GM12878 (cell line): ENCODE measurements at regions of chr9 and their contacts with region 1.

Region 1: DNA sequence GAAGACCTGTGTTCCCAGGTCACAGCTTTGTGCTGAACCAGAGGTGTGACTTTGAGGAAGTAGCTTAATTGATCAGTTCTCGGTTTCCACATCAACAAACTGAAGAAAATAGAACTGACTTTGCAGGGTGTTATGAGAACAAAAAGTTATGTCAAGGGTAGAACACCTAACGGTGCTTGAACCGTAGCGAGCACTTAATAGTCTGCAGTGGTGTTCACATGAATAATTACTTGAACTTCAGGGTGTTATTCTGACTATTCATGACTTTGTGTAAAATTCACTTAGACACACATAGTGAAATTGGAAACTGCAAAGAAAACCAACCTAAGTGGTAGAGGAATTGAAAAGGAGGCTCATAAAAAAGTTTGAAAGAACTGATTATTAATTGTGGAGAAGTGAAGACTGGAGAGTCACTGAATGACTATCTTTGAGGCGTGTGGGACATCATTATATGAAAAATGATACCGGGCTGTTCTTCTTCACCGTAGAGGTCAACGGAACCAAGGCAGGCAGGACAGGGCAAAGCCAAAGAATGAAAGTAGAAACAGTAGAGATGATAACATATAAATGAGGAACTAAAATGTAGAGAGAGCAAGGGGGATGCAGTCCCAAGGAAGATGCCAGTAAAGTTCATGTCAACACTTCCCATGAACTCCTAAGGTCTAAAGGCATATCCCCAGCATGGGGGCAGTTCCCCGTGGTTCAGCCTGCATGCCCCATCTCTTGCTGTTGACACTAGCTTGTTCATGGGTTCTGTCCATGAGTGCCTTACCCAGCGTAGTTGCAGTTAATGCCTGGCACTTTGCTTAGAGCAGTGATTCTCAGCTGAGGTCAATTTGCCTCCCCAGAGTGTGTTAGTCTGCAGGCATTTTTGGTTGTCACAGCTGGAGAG is 118.7 kb downstream of the ZNF462 start:
- DNase-seq: peak; percentile 83
- ATAC-seq: peak; percentile 85
- H3K4me3 ChIP-seq: no peak overlapping the region
- H3K27ac ChIP-seq: peak overlapping the region; percentile 28; the same call in 1 of the 2 replicates
- H3K4me1 ChIP-seq: peaks cover 21% of the 10 kb centered on the region
- H3K27me3 ChIP-seq: no peaks in the 10 kb centered on the region; a peak in 1 of 4 replicates
- CTCF ChIP-seq: no peak
- EP300 ChIP-seq: peak; percentile 53 to 80; a peak in 3 of 4 replicates
- POLR2A ChIP-seq: no peak
- RAD21 ChIP-seq: no peak

Region 2: GRCh38 chr9:106816524-106816923 is 165.1 kb before region 1 on chr9:
- CTCF ChIA-PET with region 1: no interaction called
- POLR2A ChIA-PET with region 1: no interaction called
- RAD21 ChIA-PET with region 1: no interaction called
- SMC1A ChIA-PET with region 1: no interaction called
- in situ Hi-C with region 1: no loop called
- intact Hi-C with region 1: no loop called
- DNase-seq: peak; percentile 16
- ATAC-seq: peak; percentile 85
- H3K4me3 ChIP-seq: no peak overlapping the region
- H3K27ac ChIP-seq: no peak overlapping the region
- H3K4me1 ChIP-seq: no peaks in the 10 kb centered on the region
- H3K27me3 ChIP-seq: no peaks in the 10 kb centered on the region
- CTCF ChIP-seq: no peak
- EP300 ChIP-seq: peak in 1 of 2 experiments; percentile 75; a peak in 1 of 4 replicates
- POLR2A ChIP-seq: no peak
- RAD21 ChIP-seq: no peak

Region 3: DNA sequence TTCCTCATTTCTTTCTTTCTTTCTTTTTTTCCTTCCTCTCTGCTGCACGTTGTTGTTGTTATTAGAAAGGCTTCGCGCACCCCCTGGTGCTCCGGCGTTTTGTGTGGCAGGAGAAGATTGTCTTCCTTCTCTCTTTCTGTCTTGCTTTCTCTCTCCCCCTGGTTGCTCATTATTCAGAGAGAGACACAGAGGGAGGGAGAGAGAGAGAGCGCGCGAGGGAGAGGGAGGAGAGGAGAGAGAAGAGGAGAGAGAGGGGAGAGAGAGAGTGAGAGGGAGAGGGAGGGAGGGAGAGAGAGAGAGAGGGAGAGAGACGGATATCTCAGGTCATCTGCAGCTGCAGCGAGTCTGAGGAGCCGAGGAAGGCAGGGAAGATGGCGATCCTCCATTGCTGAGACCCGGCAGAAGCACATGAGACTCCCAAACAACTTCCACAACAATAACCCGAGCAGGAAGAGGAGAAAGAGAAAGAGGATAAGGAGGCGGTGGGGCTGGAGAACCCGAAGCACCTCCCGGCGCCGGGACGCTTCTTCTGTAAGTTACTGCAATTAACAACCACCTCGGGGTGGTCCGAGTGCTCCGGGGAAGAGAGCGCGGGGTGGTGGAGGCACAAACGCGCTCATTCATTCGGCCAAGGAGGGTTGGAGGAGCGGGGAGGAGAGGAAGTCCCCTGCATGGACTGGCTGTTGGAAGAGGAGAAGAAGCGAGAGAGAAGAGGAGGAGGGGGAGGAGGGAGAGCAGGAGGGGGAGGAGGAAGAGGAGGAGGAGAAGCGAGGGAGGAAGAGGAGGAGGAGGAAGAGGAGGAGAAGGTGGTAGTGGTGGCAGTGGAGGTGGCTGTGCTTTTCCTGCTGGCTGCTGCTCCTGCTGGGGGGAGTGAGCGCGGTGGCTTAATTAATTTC is 118.6 kb before region 1 on chr9 and contains the start of gene ZNF462:
- CTCF ChIA-PET with region 1: interaction called, 26 read pairs
- POLR2A ChIA-PET with region 1: interaction called, 8 read pairs
- RAD21 ChIA-PET with region 1: interaction called, 80 read pairs
- SMC1A ChIA-PET with region 1: interaction called, 65 read pairs
- in situ Hi-C with region 1: no loop called
- intact Hi-C with region 1: loop called (anchors 1 kb)
- DNase-seq: no peak
- ATAC-seq: peak; percentile 42
- H3K4me3 ChIP-seq: no peak within 1 kb of the TSS
- H3K27ac ChIP-seq: no peak within 1 kb of the TSS
- H3K4me1 ChIP-seq: no peaks in the 10 kb centered on the region
- H3K27me3 ChIP-seq: peaks cover 6 to 19% of the 10 kb centered on the region in 2 experiments; a peak in 3 of 4 replicates
- CTCF ChIP-seq: peak in 1 of 3 experiments; percentile 44; a peak in 2 of 6 replicates
- EP300 ChIP-seq: no peak
- POLR2A ChIP-seq: no peak
- RAD21 ChIP-seq: peak; percentile 29; the same call in 1 of the 2 replicates
- polyA plus RNA-seq, gene ZNF462: 0.27 to 0.42 TPM

Region 4: GRCh38 chr9:106921341-106921899 is 60.2 kb before region 1 on chr9:
- CTCF ChIA-PET with region 1: no interaction called
- POLR2A ChIA-PET with region 1: interaction called, 3 read pairs
- RAD21 ChIA-PET with region 1: interaction called, 8 read pairs
- SMC1A ChIA-PET with region 1: interaction called, 25 read pairs
- in situ Hi-C with region 1: no loop called
- intact Hi-C with region 1: no loop called
- DNase-seq: no peak
- ATAC-seq: peak; percentile 91
- H3K4me3 ChIP-seq: no peak overlapping the region
- H3K27ac ChIP-seq: no peak overlapping the region
- H3K4me1 ChIP-seq: no peaks in the 10 kb centered on the region
- H3K27me3 ChIP-seq: no peaks in the 10 kb centered on the region
- CTCF ChIP-seq: no peak
- EP300 ChIP-seq: peak in 1 of 2 experiments; percentile 39; a peak in 2 of 4 replicates
- POLR2A ChIP-seq: no peak
- RAD21 ChIP-seq: no peak

Region 5: DNA sequence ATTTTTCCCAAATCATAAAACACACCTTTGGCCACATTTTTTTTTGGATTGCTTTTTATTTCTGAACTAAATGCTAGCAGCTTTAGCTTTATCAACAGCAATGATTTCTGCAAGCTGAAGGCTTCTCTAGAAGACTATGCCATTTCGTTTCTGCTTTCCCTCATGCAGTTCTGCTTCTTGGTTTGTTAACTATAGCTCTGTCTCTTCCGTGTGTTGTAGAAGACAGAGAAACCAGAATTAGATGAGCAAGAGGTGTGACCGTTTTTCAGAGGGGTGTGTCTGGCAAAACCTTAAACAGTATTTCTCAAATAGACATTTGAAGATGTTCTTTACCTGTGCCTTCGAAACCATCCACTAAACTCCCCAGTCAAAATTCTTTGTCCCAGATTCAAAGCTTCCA is 12.8 kb after region 1 on chr9:
- CTCF ChIA-PET with region 1: interaction called, 3 read pairs
- POLR2A ChIA-PET with region 1: interaction called, 5 read pairs
- RAD21 ChIA-PET with region 1: interaction called, 5 read pairs
- SMC1A ChIA-PET with region 1: interaction called, 15 read pairs
- in situ Hi-C with region 1: no loop called
- intact Hi-C with region 1: no loop called
- DNase-seq: no peak
- ATAC-seq: peak; percentile 76
- H3K4me3 ChIP-seq: no peak overlapping the region
- H3K27ac ChIP-seq: no peak overlapping the region
- H3K4me1 ChIP-seq: no peaks in the 10 kb centered on the region
- H3K27me3 ChIP-seq: no peaks in the 10 kb centered on the region
- CTCF ChIP-seq: no peak
- EP300 ChIP-seq: no peak
- POLR2A ChIP-seq: no peak
- RAD21 ChIP-seq: no peak

Region 6: GRCh38 chr9:107033966-107034365 is 52.3 kb after region 1 on chr9:
- CTCF ChIA-PET with region 1: interaction called, 4 read pairs
- POLR2A ChIA-PET with region 1: no interaction called
- RAD21 ChIA-PET with region 1: interaction called, 26 read pairs
- SMC1A ChIA-PET with region 1: interaction called, 14 read pairs
- in situ Hi-C with region 1: no loop called
- intact Hi-C with region 1: loop called (anchors 2 kb)
- DNase-seq: peak; percentile 50
- ATAC-seq: peak; percentile 67
- H3K4me3 ChIP-seq: no peak overlapping the region
- H3K27ac ChIP-seq: no peak overlapping the region
- H3K4me1 ChIP-seq: no peaks in the 10 kb centered on the region
- H3K27me3 ChIP-seq: no peaks in the 10 kb centered on the region
- CTCF ChIP-seq: no peak
- EP300 ChIP-seq: no peak
- POLR2A ChIP-seq: no peak
- RAD21 ChIP-seq: no peak

Region 7: DNA sequence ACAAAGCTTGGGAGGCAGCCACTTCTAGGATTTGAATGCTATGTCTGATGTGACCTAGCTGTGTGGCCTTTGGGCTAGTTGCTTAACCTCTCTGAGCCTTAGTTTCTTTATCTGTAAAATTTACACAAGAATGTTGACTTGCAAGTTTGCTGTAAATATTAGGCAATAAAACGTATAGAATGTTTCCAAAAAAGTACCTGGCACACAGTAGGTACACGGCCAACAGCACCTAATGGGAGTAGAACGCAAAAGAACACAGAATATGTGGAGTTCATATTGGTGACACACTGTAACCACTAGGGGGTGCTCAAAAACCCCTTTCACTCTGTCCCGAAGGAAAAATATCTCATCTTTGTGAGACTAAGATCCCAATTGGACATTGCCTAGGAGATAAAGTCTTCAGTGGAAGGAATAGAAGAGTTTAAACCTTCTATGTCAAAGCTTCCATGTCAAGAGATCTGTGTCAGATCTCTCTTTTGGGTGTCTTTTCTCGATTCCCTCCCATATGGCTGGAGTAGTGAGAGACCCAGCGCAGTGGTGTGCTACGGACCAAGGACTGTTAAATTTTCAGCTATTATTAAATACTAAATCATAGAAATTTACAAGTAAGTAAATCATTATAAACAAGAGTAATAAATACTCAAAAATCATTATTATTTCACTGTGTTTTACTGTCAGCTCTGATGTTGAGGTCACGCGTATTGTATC is 156.0 kb after region 1 on chr9:
- CTCF ChIA-PET with region 1: interaction called, 13 read pairs
- POLR2A ChIA-PET with region 1: no interaction called
- RAD21 ChIA-PET with region 1: interaction called, 15 read pairs
- SMC1A ChIA-PET with region 1: interaction called, 7 read pairs
- in situ Hi-C with region 1: loop called (anchors 5 kb)
- intact Hi-C with region 1: loop called (anchors 5 kb)
- DNase-seq: no peak
- ATAC-seq: peak; percentile 70
- H3K4me3 ChIP-seq: no peak overlapping the region
- H3K27ac ChIP-seq: no peak overlapping the region
- H3K4me1 ChIP-seq: no peaks in the 10 kb centered on the region
- H3K27me3 ChIP-seq: peaks cover 0 to 3% of the 10 kb centered on the region in 2 experiments; a peak in 1 of 4 replicates
- CTCF ChIP-seq: peak; percentile 46 to 65 (median 57)
- EP300 ChIP-seq: no peak
- POLR2A ChIP-seq: no peak
- RAD21 ChIP-seq: peak; percentile 55

Region 8: DNA sequence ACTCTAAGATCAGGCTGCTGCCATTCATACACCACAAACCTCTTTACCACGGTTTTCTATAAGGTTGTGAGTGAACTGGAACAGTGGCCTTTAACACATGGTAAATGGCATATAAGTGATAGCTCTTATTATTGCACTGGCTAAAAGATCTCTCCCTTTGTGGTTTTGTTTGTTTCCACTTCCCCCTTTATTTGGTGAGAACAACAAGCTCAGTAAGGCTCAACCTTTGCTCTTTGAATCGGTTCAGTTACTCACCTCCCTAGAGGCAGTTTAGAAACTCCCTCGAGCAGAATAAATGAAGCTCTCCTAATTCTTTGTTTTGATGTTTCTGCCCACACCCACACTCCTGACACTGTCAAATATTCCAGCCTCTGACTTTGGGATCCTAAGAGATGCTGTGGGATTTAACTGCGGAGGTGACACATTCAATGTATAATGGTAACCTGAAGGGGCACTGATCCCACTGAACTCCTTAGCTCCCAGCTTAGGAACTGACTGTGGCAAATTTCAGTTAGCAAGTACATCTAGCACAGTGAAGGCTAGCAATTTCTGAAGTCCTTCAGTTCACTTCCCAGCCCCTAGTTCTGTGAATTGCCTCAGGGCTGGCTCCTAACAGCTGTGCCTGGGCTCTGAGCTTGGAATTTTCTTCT is 278.9 kb after region 1 on chr9:
- CTCF ChIA-PET with region 1: interaction called, 9 read pairs
- POLR2A ChIA-PET with region 1: interaction called, 4 read pairs
- RAD21 ChIA-PET with region 1: interaction called, 17 read pairs
- SMC1A ChIA-PET with region 1: interaction called, 5 read pairs
- in situ Hi-C with region 1: no loop called
- intact Hi-C with region 1: no loop called
- DNase-seq: peak; percentile 88
- ATAC-seq: peak; percentile 98
- H3K4me3 ChIP-seq: peak overlapping the region; percentile 27; the same call in 1 of the 2 replicates
- H3K27ac ChIP-seq: peak overlapping the region; percentile 36
- H3K4me1 ChIP-seq: peaks cover 11% of the 10 kb centered on the region
- H3K27me3 ChIP-seq: no peaks in the 10 kb centered on the region
- CTCF ChIP-seq: no peak
- EP300 ChIP-seq: peak; percentile 95 to 97
- POLR2A ChIP-seq: no peak
- RAD21 ChIP-seq: no peak